ENCODE measurements at regions of chr3 and their contacts with region 1.

Region 1: GRCh38 chr3:160343132-160343531 is 55.9 kb downstream of the IFT80 start:
- DNase-seq: no peak
- ATAC-seq: no peak

Region 2: DNA sequence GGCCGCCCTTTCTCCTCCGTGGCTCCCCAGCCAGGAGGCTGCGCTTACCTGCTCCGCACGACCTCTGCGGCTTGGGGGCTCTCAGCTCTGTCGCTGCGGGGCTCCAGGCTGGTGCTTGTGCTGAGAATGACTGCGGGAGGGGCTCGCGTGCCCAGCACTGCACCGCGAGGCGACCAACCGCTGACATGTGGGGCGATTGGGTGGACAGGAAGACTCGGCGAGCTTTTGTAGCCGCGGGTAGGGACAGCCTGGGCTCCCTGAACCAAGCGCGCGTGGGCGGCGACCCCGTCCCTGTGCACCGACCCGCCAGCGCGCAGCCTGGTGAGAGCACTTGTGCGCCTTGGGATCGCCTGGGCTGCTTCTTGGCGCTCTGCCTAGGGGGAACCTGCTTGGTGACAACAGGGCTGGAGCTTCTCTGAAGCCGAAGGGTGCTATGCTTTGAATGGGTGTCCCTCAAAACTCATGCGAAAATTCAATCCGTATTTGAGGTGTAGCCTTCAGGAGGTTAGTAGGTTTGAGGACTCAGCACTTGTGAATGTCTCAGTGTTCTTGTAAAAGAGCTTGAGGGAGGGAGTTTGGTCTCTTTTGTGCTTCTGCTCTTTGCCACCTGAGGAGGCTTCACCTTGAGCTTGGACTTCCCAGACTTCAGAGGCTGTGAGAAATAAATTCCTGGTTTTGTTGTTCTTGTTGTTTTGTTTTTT is 304.1 kb before region 1 on chr3:
- intact Hi-C with region 1: loop called in 1 of 2 experiments (anchors 10 kb)
- DNase-seq: peak in 1 of 2 donors; percentile 8
- ATAC-seq: no peak

Region 3: GRCh38 chr3:160163229-160163878 is 179.8 kb before region 1 on chr3:
- intact Hi-C with region 1: loop called in 1 of 2 experiments (anchors 5 kb)
- DNase-seq: no peak
- ATAC-seq: no peak

Region 4: GRCh38 chr3:160601288-160601687 is 258.2 kb after region 1 on chr3:
- intact Hi-C with region 1: no loop called
- DNase-seq: no peak
- ATAC-seq: no peak

Measured in left colon (tissue), 2 donors.